ENCODE measurements at regions of chr5 and their contacts with region 1.

Region 1: DNA sequence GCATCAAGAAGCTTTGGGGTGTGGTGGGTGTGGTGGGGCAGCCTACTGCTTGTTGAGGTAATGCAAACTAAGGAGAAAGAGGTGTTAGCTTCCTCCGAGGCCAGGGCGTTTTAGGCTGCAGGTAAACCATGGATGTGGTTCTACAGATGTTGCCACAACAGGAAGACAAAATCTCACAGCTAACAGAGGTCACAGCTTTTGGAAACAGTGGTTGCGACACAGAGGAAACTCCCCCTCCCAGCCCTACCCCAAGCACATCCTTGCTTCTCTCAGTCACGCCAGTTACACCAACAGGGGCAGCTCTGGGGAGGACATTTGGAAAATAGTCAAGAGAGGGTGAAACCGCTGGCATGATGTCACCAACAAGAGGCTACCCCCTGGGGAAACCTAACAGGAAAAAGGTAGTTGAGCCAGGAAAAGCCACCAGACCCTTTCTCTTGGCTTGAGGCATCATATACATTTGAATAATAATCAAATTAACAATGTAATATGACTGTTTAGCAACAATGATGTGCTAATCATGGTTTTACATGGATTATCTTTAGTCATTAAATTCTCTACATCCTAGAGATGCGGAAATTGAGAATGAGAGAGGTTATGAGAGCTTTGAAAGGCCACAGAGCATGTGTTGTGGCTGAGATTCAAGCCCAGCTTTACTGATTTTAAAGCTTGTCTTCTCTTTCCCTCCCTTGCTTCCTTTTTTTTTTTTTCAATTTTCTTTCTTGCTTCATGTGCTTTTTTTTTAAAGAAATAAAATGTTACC is 82.2 kb upstream of the IL12B start:
- DNase-seq: peak; percentile 38 to 95 (median 52)
- ATAC-seq: peak; percentile 93
- H3K4me3 ChIP-seq: no peak overlapping the region
- H3K4me3 Mint-ChIP-seq: peak overlapping the region; percentile 3
- H3K27ac ChIP-seq: peak overlapping the region in 1 of 2 donors; percentile 50
- H3K27ac Mint-ChIP-seq: peak overlapping the region; percentile 66
- H3K4me1 ChIP-seq: peaks cover 38% of the 10 kb centered on the region
- H3K4me1 Mint-ChIP-seq: peaks cover 40% of the 10 kb centered on the region
- H3K27me3 ChIP-seq: no peaks in the 10 kb centered on the region
- H3K27me3 Mint-ChIP-seq: no peaks in the 10 kb centered on the region
- CTCF ChIP-seq: no peak

Region 2: GRCh38 chr5:159331093-159331973 is 81.1 kb before region 1 on chr5:
- CTCF ChIA-PET with region 1: no interaction called
- POLR2A ChIA-PET with region 1: interaction called, 4 read pairs
- intact Hi-C with region 1: loop called (anchors 5 to 10 kb)
- DNase-seq: peak; percentile 64 to 86 (median 72)
- ATAC-seq: peak; percentile 95
- H3K4me3 ChIP-seq: peak overlapping the region; percentile 62
- H3K4me3 Mint-ChIP-seq: peak overlapping the region; percentile 77
- H3K27ac ChIP-seq: peak overlapping the region in 1 of 2 donors; percentile 17
- H3K27ac Mint-ChIP-seq: peak overlapping the region; percentile 39
- H3K4me1 ChIP-seq: peaks cover 21% of the 10 kb centered on the region
- H3K4me1 Mint-ChIP-seq: peaks cover 30% of the 10 kb centered on the region
- H3K27me3 ChIP-seq: peaks cover 0 to 4% of the 10 kb centered on the region in 2 experiments
- H3K27me3 Mint-ChIP-seq: no peaks in the 10 kb centered on the region
- CTCF ChIP-seq: peak; percentile 81

Measured in CD4-positive, alpha-beta T cell (primary cell).